ENCODE measurements at regions of chr1 and their contacts with region 1.

Region 1: GRCh38 chr1:205658943-205659581 is 21.2 kb downstream of the SLC45A3 start:
- DNase-seq: peak; percentile 81
- H3K4me3 Mint-ChIP-seq: no peak overlapping the region
- H3K27ac Mint-ChIP-seq: no peak overlapping the region
- H3K4me1 Mint-ChIP-seq: no peaks in the 10 kb centered on the region
- H3K27me3 Mint-ChIP-seq: peaks cover 8% of the 10 kb centered on the region

Region 2: GRCh38 chr1:205568469-205569361 is 90.3 kb before region 1 on chr1:
- CTCF ChIA-PET with region 1: interaction called, 13 read pairs
- POLR2A ChIA-PET with region 1: no interaction called
- DNase-seq: no peak
- H3K4me3 Mint-ChIP-seq: peak overlapping the region; percentile 32
- H3K27ac Mint-ChIP-seq: no peak overlapping the region
- H3K4me1 Mint-ChIP-seq: peaks cover 2% of the 10 kb centered on the region
- H3K27me3 Mint-ChIP-seq: peaks cover 70% of the 10 kb centered on the region

Region 3: GRCh38 chr1:205600085-205600484 is 59.0 kb before region 1 on chr1:
- CTCF ChIA-PET with region 1: interaction called, 185 read pairs
- POLR2A ChIA-PET with region 1: no interaction called
- DNase-seq: no peak
- H3K4me3 Mint-ChIP-seq: no peak overlapping the region
- H3K27ac Mint-ChIP-seq: peak overlapping the region; percentile 56
- H3K4me1 Mint-ChIP-seq: peaks cover 40% of the 10 kb centered on the region
- H3K27me3 Mint-ChIP-seq: no peaks in the 10 kb centered on the region

Region 4: GRCh38 chr1:205645519-205645918 is 13.5 kb before region 1 on chr1:
- CTCF ChIA-PET with region 1: interaction called, 60 read pairs
- POLR2A ChIA-PET with region 1: no interaction called
- DNase-seq: no peak
- H3K4me3 Mint-ChIP-seq: no peak overlapping the region
- H3K27ac Mint-ChIP-seq: no peak overlapping the region
- H3K4me1 Mint-ChIP-seq: no peaks in the 10 kb centered on the region
- H3K27me3 Mint-ChIP-seq: peaks cover 3% of the 10 kb centered on the region

Region 5: GRCh38 chr1:205711104-205712020 is 52.3 kb after region 1 on chr1:
- CTCF ChIA-PET with region 1: interaction called, 25 read pairs
- POLR2A ChIA-PET with region 1: no interaction called
- DNase-seq: peak; percentile 84
- H3K4me3 Mint-ChIP-seq: no peak overlapping the region
- H3K27ac Mint-ChIP-seq: peak overlapping the region; percentile 17
- H3K4me1 Mint-ChIP-seq: peaks cover 19% of the 10 kb centered on the region
- H3K27me3 Mint-ChIP-seq: no peaks in the 10 kb centered on the region